ENCODE measurements at regions of chr20 and their contacts with region 1.

Region 1: DNA sequence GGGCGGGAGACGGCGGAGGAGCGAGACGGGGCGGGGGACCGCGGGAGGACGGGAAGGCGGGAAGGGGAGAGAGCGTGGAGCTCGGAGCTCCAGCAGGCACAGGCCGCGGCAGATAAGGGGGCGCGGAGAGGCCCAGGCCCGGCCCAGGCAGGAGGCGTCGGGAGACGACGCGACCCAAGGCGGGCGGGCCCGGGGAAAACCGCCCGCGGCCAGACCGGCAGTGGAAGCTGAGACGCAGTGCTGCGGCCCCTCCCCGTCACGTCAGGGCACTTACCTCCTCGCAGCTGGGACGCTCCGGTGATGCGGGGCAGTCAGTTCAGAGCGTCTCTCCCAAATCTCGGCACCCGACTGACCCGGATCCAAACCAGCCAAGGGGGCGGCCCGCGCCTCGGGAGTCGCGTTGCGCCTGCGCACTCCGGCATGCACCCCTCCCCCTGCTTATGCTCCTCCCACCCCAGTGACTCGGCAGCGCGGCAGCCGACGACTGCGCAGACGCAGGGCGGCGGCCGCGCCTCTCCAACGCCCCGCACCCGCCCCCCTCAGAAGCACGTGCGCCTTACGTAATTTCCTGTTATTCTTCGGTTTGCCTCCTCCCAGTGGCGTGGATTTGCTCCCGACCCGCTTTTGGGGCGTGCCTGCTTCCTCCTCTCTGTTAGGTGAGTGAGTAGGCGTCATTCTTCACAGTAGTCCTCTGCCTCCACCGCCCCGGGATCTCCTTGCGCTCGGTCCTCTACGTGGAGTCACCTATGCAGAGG is at the start of gene OSER1:
- DNase-seq: peak; percentile 98
- H3K4me3 Mint-ChIP-seq: peak within 1 kb of the TSS; percentile 99
- H3K27ac Mint-ChIP-seq: peak within 1 kb of the TSS; percentile 98
- H3K4me1 Mint-ChIP-seq: peaks cover 59% of the 10 kb centered on the region
- H3K27me3 Mint-ChIP-seq: no peaks in the 10 kb centered on the region
- total RNA-seq, gene OSER1: 22.0 and 23.4 TPM in 2 replicates

Region 2: DNA sequence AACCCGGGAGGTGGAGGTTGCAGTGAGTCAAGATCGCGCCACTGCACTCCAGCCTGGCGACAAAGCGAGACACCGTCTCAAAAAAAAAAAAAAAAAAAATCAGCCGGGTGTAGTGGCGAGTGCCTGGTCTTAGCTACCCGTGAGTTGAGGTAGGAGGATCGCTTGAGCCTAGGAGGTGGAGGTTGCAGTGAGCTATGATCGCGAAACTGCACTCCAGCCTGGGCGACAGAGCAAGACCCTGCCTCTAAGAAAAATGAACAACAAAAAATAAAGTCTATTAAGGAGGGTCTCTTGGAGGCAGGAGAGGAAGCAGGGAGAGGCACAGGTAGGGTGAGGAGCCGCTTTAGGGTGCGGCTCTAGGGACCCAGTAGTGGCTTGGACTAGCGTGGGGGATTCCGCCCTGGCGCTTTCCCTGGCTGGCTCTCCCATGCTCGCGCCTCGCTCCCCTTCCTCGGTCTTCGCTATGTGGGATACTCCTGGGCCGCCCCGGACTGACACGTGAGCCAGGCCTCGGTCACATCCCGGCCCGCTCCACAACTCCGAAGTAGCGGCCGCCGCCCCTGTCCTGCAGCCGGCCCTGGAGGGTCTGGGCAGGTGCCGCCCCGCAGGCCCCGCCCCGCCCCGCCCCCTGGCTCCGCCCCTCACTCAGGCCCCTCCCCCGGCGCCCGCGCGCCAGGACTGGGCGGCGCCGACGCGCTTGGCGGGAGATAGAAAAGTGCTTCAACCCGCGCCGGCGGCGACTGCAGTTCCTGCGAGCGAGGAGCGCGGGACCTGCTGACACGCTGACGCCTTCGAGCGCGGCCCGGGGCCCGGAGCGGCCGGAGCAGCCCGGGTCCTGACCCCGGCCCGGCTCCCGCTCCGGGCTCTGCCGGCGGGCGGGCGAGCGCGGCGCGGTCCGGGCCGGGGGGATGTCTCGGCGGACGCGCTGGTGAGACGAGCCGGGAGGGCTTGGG is 543.9 kb before region 1 on chr20 and contains the start of gene MYBL2:
- intact Hi-C with region 1: loop called (anchors 10 kb)
- DNase-seq: peak; percentile 71
- H3K4me3 Mint-ChIP-seq: peak within 1 kb of the TSS; percentile 82
- H3K27ac Mint-ChIP-seq: peak within 1 kb of the TSS; percentile 48
- H3K4me1 Mint-ChIP-seq: peaks cover 23% of the 10 kb centered on the region
- H3K27me3 Mint-ChIP-seq: peaks cover 14% of the 10 kb centered on the region
- total RNA-seq, gene MYBL2: 95.1 and 95.5 TPM in 2 replicates

Region 3: GRCh38 chr20:44310664-44311639 is 100.4 kb after region 1 on chr20 and contains the start of gene FITM2:
- intact Hi-C with region 1: loop called (anchors 1 kb)
- DNase-seq: peak; percentile 97
- H3K4me3 Mint-ChIP-seq: peak within 1 kb of the TSS; percentile 86
- H3K27ac Mint-ChIP-seq: peak within 1 kb of the TSS; percentile 87
- H3K4me1 Mint-ChIP-seq: peaks cover 18% of the 10 kb centered on the region
- H3K27me3 Mint-ChIP-seq: peaks cover 4% of the 10 kb centered on the region
- total RNA-seq, gene FITM2: 2.2 TPM in 2 replicates

Region 4: DNA sequence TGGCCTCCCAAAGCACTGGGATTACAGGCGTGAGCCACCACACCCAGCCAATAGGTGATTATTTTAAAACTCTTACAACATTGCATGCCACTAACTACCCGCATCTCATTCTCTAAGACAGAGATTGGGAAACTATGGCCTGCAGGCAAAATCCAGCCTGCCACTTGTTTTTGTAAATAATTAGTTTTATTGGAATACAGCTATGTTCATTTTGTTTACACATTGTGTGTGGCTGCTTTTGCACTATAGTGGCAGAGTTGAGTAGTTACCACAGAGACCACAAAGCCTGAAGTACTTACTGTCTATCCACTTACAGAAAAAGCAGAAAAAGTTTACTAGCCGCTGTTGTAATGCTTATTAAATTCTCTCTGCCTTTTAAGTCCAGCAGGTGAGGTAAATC is 355.4 kb after region 1 on chr20:
- intact Hi-C with region 1: no loop called
- DNase-seq: no peak
- H3K4me3 Mint-ChIP-seq: no peak overlapping the region
- H3K27ac Mint-ChIP-seq: no peak overlapping the region
- H3K4me1 Mint-ChIP-seq: no peaks in the 10 kb centered on the region
- H3K27me3 Mint-ChIP-seq: peaks cover 9% of the 10 kb centered on the region

Region 5: GRCh38 chr20:44651684-44652423 is 441.3 kb after region 1 on chr20 and contains the start of gene ADA:
- intact Hi-C with region 1: loop called (anchors 2 kb)
- DNase-seq: peak; percentile 47
- H3K4me3 Mint-ChIP-seq: peak within 1 kb of the TSS; percentile 89
- H3K27ac Mint-ChIP-seq: peak within 1 kb of the TSS; percentile 94
- H3K4me1 Mint-ChIP-seq: peaks cover 58% of the 10 kb centered on the region
- H3K27me3 Mint-ChIP-seq: no peaks in the 10 kb centered on the region
- total RNA-seq, gene ADA: 45.1 and 45.5 TPM in 2 replicates

Region 6: GRCh38 chr20:44849703-44850102 is 639.1 kb after region 1 on chr20:
- intact Hi-C with region 1: no loop called
- DNase-seq: no peak
- H3K4me3 Mint-ChIP-seq: no peak overlapping the region
- H3K27ac Mint-ChIP-seq: no peak overlapping the region
- H3K4me1 Mint-ChIP-seq: no peaks in the 10 kb centered on the region
- H3K27me3 Mint-ChIP-seq: peaks cover 17% of the 10 kb centered on the region